CD4-positive, alpha-beta T cell (primary cell): ENCODE measurements at regions of chr1 and their contacts with region 1.

Region 1: GRCh38 chr1:110209715-110210603 is at the start of gene KCNC4:
- DNase-seq: peak; percentile 86 to 98 (median 92)
- ATAC-seq: peak; percentile 85
- H3K4me3 ChIP-seq: peak within 1 kb of the TSS; percentile 70
- H3K4me3 Mint-ChIP-seq: peak within 1 kb of the TSS; percentile 94
- H3K27ac ChIP-seq: peak within 1 kb of the TSS; percentile 84 to 86
- H3K27ac Mint-ChIP-seq: peak within 1 kb of the TSS; percentile 94
- H3K4me1 ChIP-seq: peaks cover 50% of the 10 kb centered on the region
- H3K4me1 Mint-ChIP-seq: peaks cover 66% of the 10 kb centered on the region
- H3K27me3 ChIP-seq: no peaks in the 10 kb centered on the region
- H3K27me3 Mint-ChIP-seq: no peaks in the 10 kb centered on the region
- CTCF ChIP-seq: no peak
- total RNA-seq, gene KCNC4: 16.5 to 17.7 TPM

Region 2: GRCh38 chr1:110034451-110035235 is 175.3 kb before region 1 on chr1 and contains the start of gene STRIP1:
- CTCF ChIA-PET with region 1: interaction called, 8 read pairs
- POLR2A ChIA-PET with region 1: interaction called, 3 read pairs
- intact Hi-C with region 1: loop called in 1 of 2 experiments (anchors 5 kb)
- DNase-seq: peak; percentile 85 to 98 (median 89)
- ATAC-seq: peak; percentile 95
- H3K4me3 ChIP-seq: peak within 1 kb of the TSS; percentile 84
- H3K4me3 Mint-ChIP-seq: peak within 1 kb of the TSS; percentile 98
- H3K27ac ChIP-seq: peak within 1 kb of the TSS; percentile 37 to 64
- H3K27ac Mint-ChIP-seq: peak within 1 kb of the TSS; percentile 81
- H3K4me1 ChIP-seq: peaks cover 41% of the 10 kb centered on the region
- H3K4me1 Mint-ChIP-seq: peaks cover 56% of the 10 kb centered on the region
- H3K27me3 ChIP-seq: no peaks in the 10 kb centered on the region
- H3K27me3 Mint-ChIP-seq: no peaks in the 10 kb centered on the region
- CTCF ChIP-seq: no peak
- total RNA-seq, gene STRIP1: 74.3 to 80.9 TPM

Region 3: GRCh38 chr1:110196917-110197765 is 12.8 kb before region 1 on chr1:
- CTCF ChIA-PET with region 1: interaction called, 32 read pairs
- POLR2A ChIA-PET with region 1: interaction called, 3 read pairs
- intact Hi-C with region 1: no loop called
- DNase-seq: peak; percentile 24 to 75 (median 38)
- ATAC-seq: peak; percentile 99
- H3K4me3 ChIP-seq: no peak overlapping the region
- H3K4me3 Mint-ChIP-seq: no peak overlapping the region
- H3K27ac ChIP-seq: no peak overlapping the region
- H3K27ac Mint-ChIP-seq: no peak overlapping the region
- H3K4me1 ChIP-seq: no peaks in the 10 kb centered on the region
- H3K4me1 Mint-ChIP-seq: no peaks in the 10 kb centered on the region
- H3K27me3 ChIP-seq: no peaks in the 10 kb centered on the region
- H3K27me3 Mint-ChIP-seq: no peaks in the 10 kb centered on the region
- CTCF ChIP-seq: peak; percentile 96

Region 4: DNA sequence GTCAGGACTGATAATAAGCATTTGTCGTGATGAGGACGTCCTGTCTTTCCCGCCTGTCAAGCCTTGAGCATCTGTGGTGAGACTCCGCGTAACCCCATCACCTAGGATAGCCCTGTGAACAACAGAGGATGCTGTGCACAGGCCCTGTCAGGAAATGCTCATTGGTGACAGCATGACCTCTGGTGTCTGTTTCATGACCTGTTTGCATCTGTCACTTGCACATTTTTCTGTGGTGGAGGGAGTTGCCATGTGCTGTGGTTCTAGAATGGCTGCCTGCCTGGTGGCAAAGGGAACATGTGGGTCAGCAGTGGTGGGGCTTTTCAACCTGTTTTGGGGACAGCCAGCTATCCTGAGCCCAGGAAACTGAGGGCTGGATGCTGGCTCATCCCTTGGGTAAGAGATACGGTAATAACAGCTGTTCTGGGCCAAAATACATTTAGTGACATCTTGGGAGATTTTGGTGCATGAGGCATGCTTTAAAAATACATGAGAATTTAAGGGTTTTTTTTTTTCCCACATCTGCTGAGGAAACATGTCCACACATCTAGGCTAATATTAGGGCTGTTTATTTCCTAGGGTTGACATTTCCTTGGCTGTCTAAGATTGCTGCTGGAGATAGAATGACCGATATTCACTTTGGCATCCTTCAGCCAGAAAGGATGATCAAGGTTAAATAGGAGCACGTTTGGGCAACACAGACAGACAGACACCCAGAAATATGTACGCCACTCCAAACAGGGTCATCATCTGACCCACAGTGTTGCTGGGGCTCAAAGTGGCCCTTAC is 53.1 kb after region 1 on chr1:
- CTCF ChIA-PET with region 1: no interaction called
- POLR2A ChIA-PET with region 1: no interaction called
- intact Hi-C with region 1: loop called in 1 of 2 experiments (anchors 10 kb)
- DNase-seq: peak in 3 of 14 experiments; percentile 13 to 31 (median 26)
- ATAC-seq: peak; percentile 29
- H3K4me3 ChIP-seq: no peak overlapping the region
- H3K4me3 Mint-ChIP-seq: no peak overlapping the region
- H3K27ac ChIP-seq: no peak overlapping the region
- H3K27ac Mint-ChIP-seq: no peak overlapping the region
- H3K4me1 ChIP-seq: no peaks in the 10 kb centered on the region
- H3K4me1 Mint-ChIP-seq: no peaks in the 10 kb centered on the region
- H3K27me3 ChIP-seq: no peaks in the 10 kb centered on the region
- H3K27me3 Mint-ChIP-seq: peaks cover 5% of the 10 kb centered on the region
- CTCF ChIP-seq: no peak

Region 5: GRCh38 chr1:110312188-110313121 is 102.5 kb after region 1 on chr1:
- CTCF ChIA-PET with region 1: interaction called, 123 read pairs
- POLR2A ChIA-PET with region 1: interaction called, 41 read pairs
- intact Hi-C with region 1: loop called (anchors 1 kb)
- DNase-seq: peak; percentile 62 to 86 (median 70)
- ATAC-seq: peak; percentile 99
- H3K4me3 ChIP-seq: no peak overlapping the region
- H3K4me3 Mint-ChIP-seq: no peak overlapping the region
- H3K27ac ChIP-seq: no peak overlapping the region
- H3K27ac Mint-ChIP-seq: no peak overlapping the region
- H3K4me1 ChIP-seq: peaks cover 7% of the 10 kb centered on the region
- H3K4me1 Mint-ChIP-seq: no peaks in the 10 kb centered on the region
- H3K27me3 ChIP-seq: no peaks in the 10 kb centered on the region
- H3K27me3 Mint-ChIP-seq: no peaks in the 10 kb centered on the region
- CTCF ChIP-seq: peak; percentile 92

Region 6: GRCh38 chr1:110407260-110408210 is 197.6 kb after region 1 on chr1 and contains the start of gene LAMTOR5:
- CTCF ChIA-PET with region 1: interaction called, 8 read pairs
- POLR2A ChIA-PET with region 1: interaction called, 5 read pairs
- intact Hi-C with region 1: loop called in 1 of 2 experiments (anchors 1 kb)
- DNase-seq: peak; percentile 79 to 95 (median 86)
- ATAC-seq: peak; percentile 94
- H3K4me3 ChIP-seq: peak within 1 kb of the TSS; percentile 90
- H3K4me3 Mint-ChIP-seq: peak within 1 kb of the TSS; percentile 99
- H3K27ac ChIP-seq: peak within 1 kb of the TSS; percentile 84 to 88
- H3K27ac Mint-ChIP-seq: peak within 1 kb of the TSS; percentile 99
- H3K4me1 ChIP-seq: peaks cover 26% of the 10 kb centered on the region
- H3K4me1 Mint-ChIP-seq: peaks cover 38% of the 10 kb centered on the region
- H3K27me3 ChIP-seq: no peaks in the 10 kb centered on the region
- H3K27me3 Mint-ChIP-seq: no peaks in the 10 kb centered on the region
- CTCF ChIP-seq: no peak
- total RNA-seq, gene LAMTOR5: 105 to 108 TPM

Region 7: GRCh38 chr1:110495926-110496600 is 286.1 kb after region 1 on chr1:
- CTCF ChIA-PET with region 1: interaction called, 9 read pairs
- POLR2A ChIA-PET with region 1: interaction called, 4 read pairs
- intact Hi-C with region 1: loop called in 1 of 2 experiments (anchors 10 kb)
- DNase-seq: peak; percentile 59 to 86 (median 72)
- ATAC-seq: peak; percentile 84
- H3K4me3 ChIP-seq: no peak overlapping the region
- H3K4me3 Mint-ChIP-seq: no peak overlapping the region
- H3K27ac ChIP-seq: no peak overlapping the region
- H3K27ac Mint-ChIP-seq: no peak overlapping the region
- H3K4me1 ChIP-seq: no peaks in the 10 kb centered on the region
- H3K4me1 Mint-ChIP-seq: no peaks in the 10 kb centered on the region
- H3K27me3 ChIP-seq: no peaks in the 10 kb centered on the region
- H3K27me3 Mint-ChIP-seq: no peaks in the 10 kb centered on the region
- CTCF ChIP-seq: peak; percentile 95